ENCODE measurements at regions of chr2 and their contacts with region 1.

Region 1: GRCh38 chr2:202634556-202635427 is at the start of gene FAM117B:
- DNase-seq: peak; percentile 97 to 99 (median 98)
- ATAC-seq: peak; percentile 87
- H3K4me3 ChIP-seq: peak within 1 kb of the TSS; percentile 86
- H3K4me3 Mint-ChIP-seq: peak within 1 kb of the TSS; percentile 95
- H3K27ac ChIP-seq: peak within 1 kb of the TSS; percentile 89 to 96
- H3K27ac Mint-ChIP-seq: peak within 1 kb of the TSS; percentile 98
- H3K4me1 ChIP-seq: peaks cover 34% of the 10 kb centered on the region
- H3K4me1 Mint-ChIP-seq: peaks cover 56% of the 10 kb centered on the region
- H3K27me3 ChIP-seq: no peaks in the 10 kb centered on the region
- H3K27me3 Mint-ChIP-seq: no peaks in the 10 kb centered on the region
- CTCF ChIP-seq: no peak
- total RNA-seq, gene FAM117B: 46.8 to 50.4 TPM

Region 2: GRCh38 chr2:201780674-201781581 is 853.9 kb before region 1 on chr2 and contains the start of gene ALS2:
- CTCF ChIA-PET with region 1: no interaction called
- POLR2A ChIA-PET with region 1: no interaction called
- intact Hi-C with region 1: loop called in 1 of 2 experiments (anchors 10 kb)
- DNase-seq: peak; percentile 86 to 96 (median 92)
- ATAC-seq: peak; percentile 90
- H3K4me3 ChIP-seq: peak within 1 kb of the TSS; percentile 66
- H3K4me3 Mint-ChIP-seq: peak within 1 kb of the TSS; percentile 98
- H3K27ac ChIP-seq: peak within 1 kb of the TSS; percentile 77 to 88
- H3K27ac Mint-ChIP-seq: peak within 1 kb of the TSS; percentile 93
- H3K4me1 ChIP-seq: peaks cover 15% of the 10 kb centered on the region
- H3K4me1 Mint-ChIP-seq: peaks cover 20% of the 10 kb centered on the region
- H3K27me3 ChIP-seq: no peaks in the 10 kb centered on the region
- H3K27me3 Mint-ChIP-seq: no peaks in the 10 kb centered on the region
- CTCF ChIP-seq: no peak
- total RNA-seq, gene ALS2: 7.0 to 7.2 TPM

Region 3: GRCh38 chr2:201933792-201934237 is 701.0 kb before region 1 on chr2:
- CTCF ChIA-PET with region 1: no interaction called
- POLR2A ChIA-PET with region 1: no interaction called
- intact Hi-C with region 1: no loop called
- DNase-seq: no peak
- ATAC-seq: no peak
- H3K4me3 ChIP-seq: no peak overlapping the region
- H3K4me3 Mint-ChIP-seq: no peak overlapping the region
- H3K27ac ChIP-seq: no peak overlapping the region
- H3K27ac Mint-ChIP-seq: no peak overlapping the region
- H3K4me1 ChIP-seq: no peaks in the 10 kb centered on the region
- H3K4me1 Mint-ChIP-seq: no peaks in the 10 kb centered on the region
- H3K27me3 ChIP-seq: peaks cover 0 to 14% of the 10 kb centered on the region in 2 experiments
- H3K27me3 Mint-ChIP-seq: peaks cover 32% of the 10 kb centered on the region
- CTCF ChIP-seq: no peak

Region 4: DNA sequence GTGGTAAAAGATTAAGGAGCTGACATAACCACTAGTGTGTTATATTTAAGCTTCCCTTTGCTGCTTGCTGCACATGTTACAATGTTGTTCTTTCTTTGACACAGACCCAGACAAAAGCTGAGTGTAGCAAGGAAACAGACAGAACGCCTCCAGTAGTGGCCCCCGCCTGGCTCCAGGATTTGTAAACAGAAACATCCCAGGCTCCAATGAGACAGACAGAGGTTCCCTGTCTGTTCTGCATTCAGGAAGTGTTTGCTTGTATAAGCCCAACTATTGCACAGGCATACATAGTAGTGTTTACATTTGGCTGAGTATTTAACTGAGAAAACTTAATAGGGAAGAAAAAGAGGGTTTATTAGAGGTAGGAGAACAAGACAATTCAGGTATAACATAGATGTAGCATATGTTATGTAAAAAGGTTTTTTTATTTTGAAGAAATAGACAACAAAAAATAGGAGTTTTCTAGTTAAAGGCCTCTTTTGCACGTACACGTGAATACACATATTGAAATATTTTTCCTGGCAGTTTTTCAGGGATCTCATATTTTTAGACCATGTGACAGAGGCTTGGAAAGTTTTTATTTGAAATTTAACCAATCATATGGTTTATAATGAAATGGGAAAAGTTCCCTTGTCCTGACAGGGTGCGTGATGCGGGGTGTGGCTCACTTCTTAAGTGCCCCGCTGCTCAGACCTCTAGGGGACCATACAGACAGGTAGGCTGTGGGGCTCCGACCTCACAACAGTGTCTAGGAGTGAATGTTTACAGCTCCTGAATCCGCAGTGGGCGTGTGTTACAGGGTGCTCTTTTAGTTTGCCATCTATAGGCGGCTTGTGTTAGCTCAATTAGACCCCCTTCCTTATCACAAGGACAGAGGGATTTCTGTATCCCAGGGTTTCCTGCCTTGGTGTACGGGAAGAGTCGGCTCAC is 140.2 kb before region 1 on chr2:
- CTCF ChIA-PET with region 1: no interaction called
- POLR2A ChIA-PET with region 1: no interaction called
- intact Hi-C with region 1: no loop called
- DNase-seq: no peak
- ATAC-seq: no peak
- H3K4me3 ChIP-seq: no peak overlapping the region
- H3K4me3 Mint-ChIP-seq: no peak overlapping the region
- H3K27ac ChIP-seq: no peak overlapping the region
- H3K27ac Mint-ChIP-seq: no peak overlapping the region
- H3K4me1 ChIP-seq: no peaks in the 10 kb centered on the region
- H3K4me1 Mint-ChIP-seq: no peaks in the 10 kb centered on the region
- H3K27me3 ChIP-seq: no peaks in the 10 kb centered on the region
- H3K27me3 Mint-ChIP-seq: no peaks in the 10 kb centered on the region
- CTCF ChIP-seq: no peak

Region 5: GRCh38 chr2:202588647-202589581 is 45.9 kb before region 1 on chr2:
- CTCF ChIA-PET with region 1: interaction called, 5 read pairs
- POLR2A ChIA-PET with region 1: interaction called, 15 read pairs
- intact Hi-C with region 1: loop called (anchors 1 to 2 kb)
- DNase-seq: peak; percentile 42 to 87 (median 64)
- ATAC-seq: peak; percentile 99
- H3K4me3 ChIP-seq: no peak overlapping the region
- H3K4me3 Mint-ChIP-seq: no peak overlapping the region
- H3K27ac ChIP-seq: no peak overlapping the region
- H3K27ac Mint-ChIP-seq: no peak overlapping the region
- H3K4me1 ChIP-seq: peaks cover 10% of the 10 kb centered on the region
- H3K4me1 Mint-ChIP-seq: peaks cover 8% of the 10 kb centered on the region
- H3K27me3 ChIP-seq: peaks cover 0 to 2% of the 10 kb centered on the region in 2 experiments
- H3K27me3 Mint-ChIP-seq: no peaks in the 10 kb centered on the region
- CTCF ChIP-seq: peak; percentile 80

Region 6: DNA sequence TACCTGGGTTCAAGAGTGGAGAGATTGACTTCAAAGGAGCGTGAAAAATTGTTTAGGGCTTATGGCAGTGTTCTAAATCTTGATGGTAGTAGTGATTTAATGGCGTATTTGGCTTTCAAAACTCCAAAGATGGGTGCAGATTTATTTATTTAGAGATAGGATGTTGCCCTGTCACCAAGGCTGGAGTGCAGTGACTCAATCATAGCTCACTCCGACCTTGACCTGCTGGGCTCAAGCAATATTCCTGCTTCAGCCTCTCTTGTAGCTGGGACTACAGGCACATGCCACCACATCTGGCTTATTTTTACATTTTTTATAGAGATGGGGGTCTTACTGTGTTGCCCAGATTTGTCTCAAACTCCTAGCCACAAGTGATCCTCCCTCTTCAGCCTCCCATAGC is 52.5 kb after region 1 on chr2:
- CTCF ChIA-PET with region 1: no interaction called
- POLR2A ChIA-PET with region 1: interaction called, 8 read pairs
- intact Hi-C with region 1: loop called in 1 of 2 experiments (anchors 10 kb)
- DNase-seq: no peak
- ATAC-seq: no peak
- H3K4me3 ChIP-seq: no peak overlapping the region
- H3K4me3 Mint-ChIP-seq: no peak overlapping the region
- H3K27ac ChIP-seq: no peak overlapping the region
- H3K27ac Mint-ChIP-seq: no peak overlapping the region
- H3K4me1 ChIP-seq: peaks cover 15% of the 10 kb centered on the region
- H3K4me1 Mint-ChIP-seq: peaks cover 73% of the 10 kb centered on the region
- H3K27me3 ChIP-seq: no peaks in the 10 kb centered on the region
- H3K27me3 Mint-ChIP-seq: no peaks in the 10 kb centered on the region
- CTCF ChIP-seq: no peak

Region 7: GRCh38 chr2:202736826-202737225 is 102.0 kb after region 1 on chr2:
- CTCF ChIA-PET with region 1: no interaction called
- POLR2A ChIA-PET with region 1: interaction called, 20 read pairs
- intact Hi-C with region 1: no loop called
- DNase-seq: peak in 2 of 14 experiments; percentile 10 to 26
- ATAC-seq: peak; percentile 51
- H3K4me3 ChIP-seq: no peak overlapping the region
- H3K4me3 Mint-ChIP-seq: no peak overlapping the region
- H3K27ac ChIP-seq: no peak overlapping the region
- H3K27ac Mint-ChIP-seq: peak overlapping the region; percentile 19
- H3K4me1 ChIP-seq: peaks cover 7% of the 10 kb centered on the region
- H3K4me1 Mint-ChIP-seq: peaks cover 32% of the 10 kb centered on the region
- H3K27me3 ChIP-seq: no peaks in the 10 kb centered on the region
- H3K27me3 Mint-ChIP-seq: no peaks in the 10 kb centered on the region
- CTCF ChIP-seq: no peak

Region 8: DNA sequence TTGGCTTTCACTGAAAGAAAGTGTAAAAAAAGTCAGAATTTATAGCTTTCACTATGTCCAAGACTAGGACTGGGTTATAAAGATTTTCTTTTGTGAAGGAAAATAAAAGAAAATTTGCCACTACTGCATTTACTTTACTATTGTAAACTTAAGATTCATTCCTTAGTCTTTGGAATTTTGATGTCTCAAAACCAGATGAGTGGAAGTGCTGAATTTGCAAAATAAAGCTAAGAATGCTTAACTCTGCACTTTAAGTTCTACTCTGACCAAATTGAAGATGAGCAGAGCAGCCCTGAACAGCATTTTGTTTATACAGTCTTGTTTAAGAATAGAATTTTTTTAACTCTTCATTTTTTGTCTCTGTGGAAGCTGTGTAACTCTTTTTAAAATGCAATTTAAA is 134.4 kb after region 1 on chr2:
- CTCF ChIA-PET with region 1: no interaction called
- POLR2A ChIA-PET with region 1: interaction called, 32 read pairs
- intact Hi-C with region 1: loop called in 1 of 2 experiments (anchors 5 kb)
- DNase-seq: no peak
- ATAC-seq: no peak
- H3K4me3 ChIP-seq: no peak overlapping the region
- H3K4me3 Mint-ChIP-seq: no peak overlapping the region
- H3K27ac ChIP-seq: no peak overlapping the region
- H3K27ac Mint-ChIP-seq: no peak overlapping the region
- H3K4me1 ChIP-seq: no peaks in the 10 kb centered on the region
- H3K4me1 Mint-ChIP-seq: peaks cover 29% of the 10 kb centered on the region
- H3K27me3 ChIP-seq: no peaks in the 10 kb centered on the region
- H3K27me3 Mint-ChIP-seq: no peaks in the 10 kb centered on the region
- CTCF ChIP-seq: no peak

Region 9: DNA sequence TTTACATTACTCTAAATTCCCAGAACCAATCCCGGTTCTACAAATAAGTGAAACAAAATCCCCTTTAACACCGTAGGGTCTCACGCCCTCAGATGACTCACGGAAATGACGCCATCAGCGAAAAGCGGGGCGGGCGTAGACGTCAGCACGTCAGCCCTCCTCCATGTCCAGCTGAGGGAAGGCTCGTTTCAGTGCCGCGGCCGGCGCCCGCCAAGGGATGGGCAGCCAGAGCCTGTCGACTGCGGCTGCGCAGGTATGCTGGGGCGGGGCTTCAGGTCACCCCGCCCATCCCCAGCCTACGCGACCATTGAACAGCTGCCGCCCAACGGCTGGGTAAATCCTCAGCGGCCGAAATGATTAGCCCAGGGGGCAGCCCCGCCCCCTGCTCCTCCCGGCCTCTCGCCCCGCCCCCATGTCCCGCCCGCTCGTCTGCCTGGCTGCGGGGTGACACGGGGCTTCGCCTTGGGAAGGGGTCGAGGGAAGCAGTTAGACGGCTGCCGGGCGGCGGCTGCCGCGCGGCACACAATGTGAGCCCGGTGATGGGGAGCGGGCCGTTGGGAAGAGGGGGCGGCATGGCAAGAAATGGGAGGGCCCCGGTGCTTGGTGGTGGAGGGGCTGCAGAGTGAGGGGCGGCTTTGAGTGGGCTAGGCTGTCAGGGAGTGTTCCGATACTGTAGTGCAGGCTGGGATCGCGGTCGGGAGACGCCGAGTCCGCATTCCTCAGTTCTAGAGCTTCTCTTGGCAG is 379.8 kb after region 1 on chr2 and contains the start of gene NBEAL1:
- CTCF ChIA-PET with region 1: no interaction called
- POLR2A ChIA-PET with region 1: interaction called, 12 read pairs
- intact Hi-C with region 1: loop called in 1 of 2 experiments (anchors 5 kb)
- DNase-seq: peak; percentile 86 to 99 (median 94)
- ATAC-seq: peak; percentile 87
- H3K4me3 ChIP-seq: peak within 1 kb of the TSS; percentile 88
- H3K4me3 Mint-ChIP-seq: peak within 1 kb of the TSS; percentile 93
- H3K27ac ChIP-seq: peak within 1 kb of the TSS; percentile 64 to 86
- H3K27ac Mint-ChIP-seq: peak within 1 kb of the TSS; percentile 93
- H3K4me1 ChIP-seq: peaks cover 15% of the 10 kb centered on the region
- H3K4me1 Mint-ChIP-seq: peaks cover 50% of the 10 kb centered on the region
- H3K27me3 ChIP-seq: no peaks in the 10 kb centered on the region
- H3K27me3 Mint-ChIP-seq: no peaks in the 10 kb centered on the region
- CTCF ChIP-seq: no peak
- total RNA-seq, gene NBEAL1: 8.3 to 11.2 TPM

Measured in CD4-positive, alpha-beta T cell (primary cell).